ENCODE measurements at regions of chr3 and their contacts with region 1.

Region 1: GRCh38 chr3:59675495-59675894 is 625.7 kb upstream of the CFAP20DC start:
- DNase-seq: no peak
- H3K4me3 ChIP-seq: no peak overlapping the region
- H3K27ac ChIP-seq: no peak overlapping the region
- H3K4me1 ChIP-seq: no peaks in the 10 kb centered on the region
- CTCF ChIP-seq: no peak

Region 2: GRCh38 chr3:59510576-59510975 is 164.9 kb before region 1 on chr3:
- CTCF ChIA-PET with region 1: no interaction called
- POLR2A ChIA-PET with region 1: no interaction called
- intact Hi-C with region 1: no loop called
- DNase-seq: no peak
- H3K4me3 ChIP-seq: no peak overlapping the region
- H3K27ac ChIP-seq: no peak overlapping the region
- H3K4me1 ChIP-seq: no peaks in the 10 kb centered on the region
- CTCF ChIP-seq: no peak

Region 3: DNA sequence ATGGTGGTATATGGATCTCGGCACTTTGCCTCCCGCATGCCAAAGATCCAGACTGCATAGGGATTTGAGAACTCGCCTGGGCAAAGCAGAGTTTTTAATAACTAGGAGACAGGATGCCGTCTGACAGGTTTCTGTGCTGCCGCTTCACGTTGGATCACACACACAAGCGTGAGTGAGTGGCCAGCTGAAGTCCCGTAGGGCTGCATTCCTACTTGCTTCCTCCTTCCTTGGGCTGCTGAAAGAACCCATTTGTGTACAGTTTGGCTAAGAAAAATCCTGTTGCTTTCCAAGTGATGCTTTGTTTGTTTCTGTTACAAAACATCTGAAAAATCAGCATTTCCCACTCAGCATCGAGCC is 21.4 kb before region 1 on chr3:
- CTCF ChIA-PET with region 1: no interaction called
- POLR2A ChIA-PET with region 1: no interaction called
- intact Hi-C with region 1: no loop called
- DNase-seq: no peak
- H3K4me3 ChIP-seq: no peak overlapping the region
- H3K27ac ChIP-seq: no peak overlapping the region
- H3K4me1 ChIP-seq: no peaks in the 10 kb centered on the region
- CTCF ChIP-seq: no peak

Region 4: DNA sequence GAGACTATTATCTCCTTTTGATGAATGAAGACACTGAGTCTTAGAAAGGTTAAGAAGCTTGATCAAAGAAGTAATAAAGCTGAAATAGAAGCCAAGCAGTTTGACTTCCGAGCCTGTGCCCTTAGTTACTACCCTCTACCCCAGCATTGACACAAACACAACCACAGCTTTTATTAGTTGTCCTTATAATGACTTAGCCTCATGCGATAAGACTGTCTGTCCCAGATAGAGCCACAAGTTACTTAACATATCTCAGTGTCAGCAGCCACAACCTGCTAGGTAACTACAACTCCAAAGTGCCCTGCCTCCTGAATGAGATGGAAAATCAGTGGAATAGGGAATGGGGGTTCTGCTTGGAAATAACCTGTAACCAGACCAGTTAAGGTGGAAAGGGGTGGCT is 155.9 kb after region 1 on chr3:
- CTCF ChIA-PET with region 1: no interaction called
- POLR2A ChIA-PET with region 1: interaction called, 15 read pairs
- intact Hi-C with region 1: no loop called
- DNase-seq: no peak
- H3K4me3 ChIP-seq: no peak overlapping the region
- H3K27ac ChIP-seq: no peak overlapping the region
- H3K4me1 ChIP-seq: peaks cover 2% of the 10 kb centered on the region
- CTCF ChIP-seq: no peak